Activated T-helper 2 cell treated with anti-CD3 and anti-CD28 coated beads, Interferon-gamma antibody, Interleukin-2, Interleukin-4, amounts not matched to agents 10 μg/mL and 5 μg/mL and 100 μg/mL, durations not matched to agents 14 hours and 24 hours and 36 hours (primary cell): ENCODE measurements at regions of chr22 and their contacts with region 1.

Region 1: GRCh38 chr22:23036684-23037428 is 33.5 kb upstream of the GNAZ start:
- DNase-seq: no peak
- H3K4me3 Mint-ChIP-seq: no peak overlapping the region
- H3K27ac Mint-ChIP-seq: no peak overlapping the region
- H3K4me1 Mint-ChIP-seq: peaks cover 3% of the 10 kb centered on the region
- H3K27me3 Mint-ChIP-seq: peaks cover 13% of the 10 kb centered on the region

Region 2: GRCh38 chr22:22981670-22982571 is 54.9 kb before region 1 on chr22:
- intact Hi-C with region 1: loop called (anchors 10 kb)
- DNase-seq: no peak
- H3K4me3 Mint-ChIP-seq: no peak overlapping the region
- H3K27ac Mint-ChIP-seq: no peak overlapping the region
- H3K4me1 Mint-ChIP-seq: no peaks in the 10 kb centered on the region
- H3K27me3 Mint-ChIP-seq: peaks cover 16% of the 10 kb centered on the region

Region 3: DNA sequence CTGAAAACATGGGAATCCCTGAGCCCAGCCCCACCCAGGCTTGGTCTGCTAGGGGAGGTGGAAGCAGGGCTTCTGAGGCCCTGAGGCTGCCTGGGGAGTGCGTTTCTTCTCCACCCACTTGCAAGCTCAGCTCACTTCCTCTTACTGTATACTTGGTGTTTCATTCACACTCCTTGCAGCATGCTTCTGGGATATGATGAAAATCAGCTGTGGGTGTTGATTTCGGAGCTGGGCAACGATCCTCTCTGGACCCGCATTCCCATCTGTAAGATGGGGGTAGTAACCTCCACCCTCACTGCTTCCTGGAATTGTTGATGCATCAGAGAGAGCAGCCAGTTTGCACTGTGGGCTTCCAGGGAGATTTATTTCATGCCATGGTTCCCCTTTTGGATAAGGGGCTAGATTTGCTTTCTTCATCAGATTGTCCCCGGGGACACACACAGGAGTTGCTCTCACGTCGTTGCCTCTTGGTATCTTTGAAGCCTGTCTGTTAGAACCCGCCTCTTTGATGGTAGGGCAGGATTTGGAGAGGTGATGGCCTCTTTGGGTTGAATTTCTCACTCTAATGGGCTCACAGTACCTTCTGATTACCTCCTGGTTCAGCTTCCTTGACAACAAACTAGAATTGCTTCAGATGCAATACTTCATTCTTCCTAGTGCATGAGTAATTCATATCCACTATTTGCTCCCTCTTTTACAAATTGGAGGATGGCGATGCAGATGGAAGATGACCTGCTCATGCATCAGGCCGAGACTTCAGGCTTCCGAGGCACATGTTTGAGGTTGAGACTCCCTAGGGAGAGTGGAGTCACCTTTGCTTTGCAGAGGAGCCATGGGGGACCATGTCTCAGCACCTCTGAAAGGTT is 183.9 kb after region 1 on chr22:
- intact Hi-C with region 1: no loop called
- DNase-seq: no peak
- H3K4me3 Mint-ChIP-seq: peak overlapping the region; percentile 51
- H3K27ac Mint-ChIP-seq: peak overlapping the region; percentile 77
- H3K4me1 Mint-ChIP-seq: peaks cover 80% of the 10 kb centered on the region
- H3K27me3 Mint-ChIP-seq: no peaks in the 10 kb centered on the region